Caco-2 (cell line): ENCODE measurements at regions of chr7 and their contacts with region 1.

Region 1: GRCh38 chr7:74439546-74439945 is 14.2 kb upstream of the GTF2IRD1 start:
- DNase-seq: no peak
- H3K4me3 ChIP-seq: no peak overlapping the region
- H3K4me3 Mint-ChIP-seq: no peak overlapping the region
- H3K27ac Mint-ChIP-seq: no peak overlapping the region
- H3K4me1 ChIP-seq: 0 out of 2 replicates have a peak, but pooled peaks cover 3% of the 10 kb centered on the region
- H3K4me1 Mint-ChIP-seq: no peaks in the 10 kb centered on the region
- H3K27me3 ChIP-seq: no peaks in the 10 kb centered on the region
- H3K27me3 Mint-ChIP-seq: no peaks in the 10 kb centered on the region
- CTCF ChIP-seq: no peak

Region 2: DNA sequence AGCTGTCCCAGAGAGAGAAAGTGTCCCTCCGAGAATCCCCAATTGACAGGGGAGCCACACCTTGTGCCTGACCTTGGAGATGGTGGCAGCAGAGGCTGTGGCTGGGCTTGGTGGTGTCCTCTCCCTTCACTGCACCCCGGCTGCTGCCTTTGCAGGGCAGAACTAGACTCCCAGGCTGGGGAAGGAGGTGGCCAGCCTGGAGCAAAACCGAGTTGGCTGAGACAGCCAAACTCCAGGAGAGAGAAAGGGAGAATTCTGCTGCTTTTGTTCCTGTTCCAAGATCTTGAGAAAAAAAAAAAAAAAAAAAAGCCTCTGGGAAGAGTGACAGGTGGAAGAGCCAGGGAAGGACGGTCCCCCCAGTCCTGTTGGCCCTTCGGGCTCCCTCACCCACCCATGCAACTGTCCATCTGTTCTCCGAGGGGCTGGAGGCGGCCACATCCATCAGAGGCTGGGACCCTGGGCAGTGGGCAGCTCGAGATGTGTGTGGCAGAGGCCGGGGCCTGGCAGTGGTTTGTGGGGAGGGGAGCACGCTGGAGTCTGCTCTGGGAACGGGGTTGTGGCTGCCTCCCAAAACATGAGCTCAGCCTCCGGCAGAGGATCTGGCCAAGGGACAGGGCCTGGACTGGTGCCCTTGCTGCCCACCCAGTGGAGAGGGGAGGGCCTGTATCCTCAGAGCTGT is 114.9 kb before region 1 on chr7:
- CTCF ChIA-PET with region 1: no interaction called
- POLR2A ChIA-PET with region 1: no interaction called
- intact Hi-C with region 1: no loop called
- DNase-seq: no peak
- H3K4me3 ChIP-seq: no peak overlapping the region
- H3K4me3 Mint-ChIP-seq: no peak overlapping the region
- H3K27ac Mint-ChIP-seq: no peak overlapping the region
- H3K4me1 ChIP-seq: no peaks in the 10 kb centered on the region
- H3K4me1 Mint-ChIP-seq: no peaks in the 10 kb centered on the region
- H3K27me3 ChIP-seq: no peaks in the 10 kb centered on the region
- H3K27me3 Mint-ChIP-seq: no peaks in the 10 kb centered on the region
- CTCF ChIP-seq: no peak

Region 3: GRCh38 chr7:74405191-74405898 is 34.2 kb before region 1 on chr7:
- CTCF ChIA-PET with region 1: no interaction called
- POLR2A ChIA-PET with region 1: no interaction called
- intact Hi-C with region 1: no loop called
- DNase-seq: peak in 1 of 2 experiments; percentile 31
- H3K4me3 ChIP-seq: no peak overlapping the region
- H3K4me3 Mint-ChIP-seq: no peak overlapping the region
- H3K27ac Mint-ChIP-seq: no peak overlapping the region
- H3K4me1 ChIP-seq: no peaks in the 10 kb centered on the region
- H3K4me1 Mint-ChIP-seq: no peaks in the 10 kb centered on the region
- H3K27me3 ChIP-seq: no peaks in the 10 kb centered on the region
- H3K27me3 Mint-ChIP-seq: no peaks in the 10 kb centered on the region
- CTCF ChIP-seq: peak; percentile 36 to 41

Region 4: GRCh38 chr7:74544706-74545469 is 105.3 kb after region 1 on chr7:
- CTCF ChIA-PET with region 1: no interaction called
- POLR2A ChIA-PET with region 1: no interaction called
- intact Hi-C with region 1: loop called (anchors 5 kb)
- DNase-seq: peak; percentile 61 to 67
- H3K4me3 ChIP-seq: no peak overlapping the region
- H3K4me3 Mint-ChIP-seq: no peak overlapping the region
- H3K27ac Mint-ChIP-seq: peak overlapping the region; percentile 69
- H3K4me1 ChIP-seq: 0 out of 2 replicates have a peak, but pooled peaks cover 6% of the 10 kb centered on the region
- H3K4me1 Mint-ChIP-seq: peaks cover 7% of the 10 kb centered on the region
- H3K27me3 ChIP-seq: no peaks in the 10 kb centered on the region
- H3K27me3 Mint-ChIP-seq: no peaks in the 10 kb centered on the region
- CTCF ChIP-seq: peak; percentile 69 to 74